Mammary epithelial cell (primary cell): ENCODE measurements at regions of chr1 and their contacts with region 1.

Region 1: DNA sequence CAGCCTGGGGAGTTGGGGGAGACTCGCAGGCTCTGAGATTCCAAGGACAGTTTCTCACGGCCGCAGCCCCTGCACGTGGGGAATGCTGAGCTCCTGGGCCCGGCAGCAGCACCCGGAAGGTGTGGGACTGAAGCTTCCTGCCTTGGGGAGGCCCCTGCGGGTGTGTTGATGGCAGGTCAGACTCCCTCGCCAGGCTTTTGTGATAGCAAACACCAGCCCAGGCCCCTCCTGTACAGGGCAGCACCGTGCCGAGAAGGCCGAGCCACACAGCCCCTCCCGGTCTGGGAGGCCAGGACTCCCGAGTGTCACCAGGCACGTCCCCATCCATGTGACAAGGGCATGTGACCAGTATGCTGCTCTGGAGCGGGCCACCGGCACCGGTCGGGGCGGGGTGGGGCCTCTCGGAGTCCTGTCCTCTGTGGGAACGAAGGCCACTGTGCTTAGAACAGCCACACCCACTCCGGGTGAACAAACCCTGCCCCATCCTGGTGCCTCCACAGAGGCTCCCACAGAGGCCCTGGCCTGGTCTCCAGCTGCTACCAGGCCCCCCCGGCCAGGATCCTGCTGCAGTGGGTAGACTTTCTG is 31.1 kb upstream of the ARHGEF16 start:
- DNase-seq: no peak
- H3K4me3 ChIP-seq: no peak overlapping the region
- H3K27ac ChIP-seq: no peak overlapping the region
- H3K4me1 ChIP-seq: no peaks in the 10 kb centered on the region
- H3K27me3 ChIP-seq: peaks cover 2% of the 10 kb centered on the region
- CTCF ChIP-seq: no peak

Region 2: DNA sequence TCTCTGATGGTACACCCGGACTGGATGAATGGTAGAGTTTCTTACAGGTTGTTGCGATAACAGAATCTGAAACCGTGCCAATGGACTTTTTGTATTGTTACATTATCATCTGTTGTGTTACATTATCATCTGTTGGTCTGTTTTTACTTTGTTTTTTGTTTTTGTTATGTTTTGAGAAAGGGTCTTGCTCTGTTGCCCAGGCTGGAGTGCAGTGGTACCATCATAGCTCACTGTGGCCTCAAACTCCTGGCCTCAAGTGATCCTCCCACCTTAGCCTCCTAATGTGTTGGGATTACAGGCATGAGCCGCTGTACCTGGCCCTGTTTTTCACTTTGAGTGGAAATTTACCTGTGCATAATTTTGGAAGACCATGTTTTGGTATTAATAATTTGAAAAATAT is 1000.8 kb before region 1 on chr1:
- CTCF ChIA-PET with region 1: no interaction called
- dilution Hi-C with region 1: loop called (anchors 5 kb)
- in situ Hi-C with region 1: loop called (anchors 10 kb)
- intact Hi-C with region 1: no loop called
- DNase-seq: no peak
- H3K4me3 ChIP-seq: no peak overlapping the region
- H3K27ac ChIP-seq: no peak overlapping the region
- H3K4me1 ChIP-seq: peaks cover 6% of the 10 kb centered on the region
- H3K27me3 ChIP-seq: no peaks in the 10 kb centered on the region
- CTCF ChIP-seq: no peak

Region 3: GRCh38 chr1:2514863-2515762 is 908.2 kb before region 1 on chr1:
- CTCF ChIA-PET with region 1: no interaction called
- dilution Hi-C with region 1: loop called (anchors 10 kb)
- in situ Hi-C with region 1: no loop called
- intact Hi-C with region 1: no loop called
- DNase-seq: no peak
- H3K4me3 ChIP-seq: no peak overlapping the region
- H3K27ac ChIP-seq: no peak overlapping the region
- H3K4me1 ChIP-seq: no peaks in the 10 kb centered on the region
- H3K27me3 ChIP-seq: no peaks in the 10 kb centered on the region
- CTCF ChIP-seq: peak in 1 of 2 donors; percentile 14

Region 4: DNA sequence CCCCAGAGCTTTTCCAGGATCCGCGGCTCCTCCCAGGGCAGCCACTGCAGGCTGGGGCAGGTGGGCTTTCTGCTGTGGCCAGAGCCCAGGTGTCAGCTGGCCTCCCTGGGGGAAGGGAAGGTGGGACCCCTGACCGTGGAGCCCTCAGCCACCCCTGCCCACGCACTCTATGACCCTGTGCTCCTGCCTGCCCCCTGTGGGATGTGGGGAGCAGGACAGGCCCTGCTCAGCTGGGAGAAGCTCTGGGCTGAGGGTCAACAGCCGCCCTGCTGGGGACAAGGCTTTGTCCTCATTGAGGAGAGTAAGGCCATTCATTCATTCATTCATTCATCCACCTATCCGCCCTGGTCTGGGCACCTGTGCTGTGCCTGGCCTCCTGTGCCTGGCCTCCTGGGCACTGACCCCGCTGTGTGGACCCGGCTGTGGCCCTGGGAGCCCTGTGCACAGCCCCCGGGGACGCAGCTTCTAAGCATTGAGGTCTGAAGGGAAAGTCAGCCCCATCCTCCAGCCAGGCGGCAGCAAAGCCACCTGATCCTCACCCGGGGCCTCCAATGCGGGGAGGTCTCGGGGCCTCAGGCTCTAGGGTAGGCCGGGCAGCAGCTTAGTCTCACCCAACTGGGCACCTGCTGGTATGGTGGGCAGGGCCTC is 861.3 kb before region 1 on chr1:
- CTCF ChIA-PET with region 1: no interaction called
- dilution Hi-C with region 1: loop called (anchors 10 kb)
- in situ Hi-C with region 1: no loop called
- intact Hi-C with region 1: no loop called
- DNase-seq: no peak
- H3K4me3 ChIP-seq: no peak overlapping the region
- H3K27ac ChIP-seq: no peak overlapping the region
- H3K4me1 ChIP-seq: peaks cover 4% of the 10 kb centered on the region
- H3K27me3 ChIP-seq: no peaks in the 10 kb centered on the region
- CTCF ChIP-seq: peak; percentile 30 to 57

Region 5: GRCh38 chr1:3471302-3472087 is 48.2 kb after region 1 on chr1:
- CTCF ChIA-PET with region 1: no interaction called
- dilution Hi-C with region 1: loop called (anchors 5 kb)
- in situ Hi-C with region 1: no loop called
- intact Hi-C with region 1: no loop called
- DNase-seq: no peak
- H3K4me3 ChIP-seq: no peak overlapping the region
- H3K27ac ChIP-seq: no peak overlapping the region
- H3K4me1 ChIP-seq: peaks cover 57% of the 10 kb centered on the region
- H3K27me3 ChIP-seq: no peaks in the 10 kb centered on the region
- CTCF ChIP-seq: peak; percentile 7 to 47